Mammary epithelial cell (primary cell): ENCODE measurements at regions of chr15 and their contacts with region 1.

Region 1: GRCh38 chr15:45855907-45856579 is 221.2 kb downstream of the SQOR start:
- DNase-seq: peak; percentile 91
- H3K4me3 ChIP-seq: no peak overlapping the region
- H3K27ac ChIP-seq: peak overlapping the region; percentile 41
- H3K4me1 ChIP-seq: peaks cover 20% of the 10 kb centered on the region
- H3K27me3 ChIP-seq: no peaks in the 10 kb centered on the region
- CTCF ChIP-seq: no peak

Region 2: DNA sequence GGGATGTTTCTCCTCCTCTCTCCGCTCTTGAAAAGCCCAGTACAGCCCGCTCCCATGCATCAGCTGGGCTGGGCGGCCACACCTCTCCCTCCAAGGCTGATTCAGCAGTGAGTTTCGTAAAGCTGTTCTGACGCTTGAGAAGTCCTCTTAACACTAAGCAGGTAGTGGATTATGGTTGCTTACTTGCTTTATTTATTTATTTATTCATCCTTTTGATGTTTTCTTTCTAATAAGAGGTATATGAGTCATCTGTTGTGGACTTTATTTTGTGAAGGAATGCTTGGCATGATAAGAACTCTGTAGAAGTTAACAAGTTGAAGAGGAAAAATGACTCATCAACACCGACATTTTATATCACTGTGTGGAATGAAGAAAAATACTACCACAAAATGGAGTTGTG is 63.8 kb after region 1 on chr15:
- CTCF ChIA-PET with region 1: no interaction called
- dilution Hi-C with region 1: no loop called
- in situ Hi-C with region 1: no loop called
- intact Hi-C with region 1: loop called (anchors 2 kb)
- DNase-seq: peak; percentile 74
- H3K4me3 ChIP-seq: no peak overlapping the region
- H3K27ac ChIP-seq: no peak overlapping the region
- H3K4me1 ChIP-seq: peaks cover 4% of the 10 kb centered on the region
- H3K27me3 ChIP-seq: no peaks in the 10 kb centered on the region
- CTCF ChIP-seq: no peak